Kidney (tissue), 22 donors: ENCODE measurements at regions of chr22 and their contacts with region 1.

Region 1: DNA sequence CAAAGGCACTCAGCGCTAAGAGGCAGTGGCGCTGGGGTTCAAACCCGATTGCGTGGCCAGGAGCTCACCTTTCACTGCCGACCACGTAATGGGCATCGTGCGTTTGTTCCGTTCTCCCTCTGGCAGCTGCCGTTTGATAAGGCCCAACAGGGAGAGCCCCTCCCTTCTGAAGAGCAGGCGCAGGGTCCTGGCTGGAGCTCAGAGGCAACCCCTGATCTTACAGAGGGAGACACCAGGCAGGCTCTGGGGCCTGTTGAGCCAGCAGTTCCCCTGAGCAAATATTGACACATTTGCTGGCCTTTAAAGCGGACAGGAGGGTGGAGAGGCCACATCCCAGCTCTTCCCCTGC is 11.7 kb upstream of the C1QTNF6 start:
- DNase-seq: no peak
- H3K4me3 ChIP-seq: peak overlapping the region in 2 of 3 donors; percentile 23 to 30
- H3K27ac ChIP-seq: no peak overlapping the region
- H3K4me1 ChIP-seq: peaks cover 0 to 29% (median 26%) of the 10 kb centered on the region in 3 donors
- H3K27me3 ChIP-seq: no peaks in the 10 kb centered on the region
- CTCF ChIP-seq: no peak

Region 2: DNA sequence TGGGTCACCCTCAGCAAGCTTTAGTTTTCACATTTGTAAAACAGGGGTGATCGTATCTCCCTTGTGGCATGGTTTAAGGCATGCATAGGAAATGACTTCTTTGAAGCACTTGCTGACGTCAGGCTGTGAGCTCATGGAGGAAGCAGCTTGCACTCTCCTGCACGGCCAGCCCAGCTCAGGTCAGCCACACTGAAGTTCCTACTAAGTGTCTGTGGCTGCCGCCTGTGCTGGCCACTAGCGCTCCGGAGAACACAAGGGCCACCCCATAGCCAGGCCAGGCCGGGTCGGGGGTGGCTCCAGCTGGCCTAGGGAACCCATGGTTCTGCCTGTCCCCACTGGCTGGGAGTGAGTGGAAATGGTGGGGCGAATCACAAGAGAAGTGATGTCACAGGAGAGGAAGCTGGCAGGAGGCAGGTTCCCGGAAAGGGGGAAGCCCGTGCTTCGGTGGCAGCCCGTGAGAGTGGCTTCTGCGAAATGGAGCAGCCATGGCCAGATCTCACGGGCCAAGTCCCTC is 120.0 kb before region 1 on chr22:
- intact Hi-C with region 1: loop called (anchors 10 kb)
- DNase-seq: peak in 1 of 5 donors; percentile 53
- H3K4me3 ChIP-seq: no peak overlapping the region
- H3K27ac ChIP-seq: peak overlapping the region in 1 of 2 donors; percentile 60
- H3K4me1 ChIP-seq: peaks cover 0 to 3% (median 0%) of the 10 kb centered on the region in 3 donors
- H3K27me3 ChIP-seq: no peaks in the 10 kb centered on the region
- CTCF ChIP-seq: no peak

Region 3: GRCh38 chr22:37260901-37261336 is 61.2 kb after region 1 on chr22:
- intact Hi-C with region 1: no loop called
- DNase-seq: peak in 4 of 5 donors; percentile 68 to 77 (median 70)
- H3K4me3 ChIP-seq: no peak overlapping the region
- H3K27ac ChIP-seq: no peak overlapping the region
- H3K4me1 ChIP-seq: no peaks in the 10 kb centered on the region
- H3K27me3 ChIP-seq: no peaks in the 10 kb centered on the region
- CTCF ChIP-seq: peak; percentile 75